ENCODE measurements at regions of chr19 and their contacts with region 1.

Region 1: GRCh38 chr19:46614114-46614722 is 10.7 kb downstream of the PTGIR start:
- DNase-seq: peak; percentile 71 to 89 (median 77)
- ATAC-seq: peak; percentile 58
- H3K4me3 ChIP-seq: no peak overlapping the region
- H3K4me3 Mint-ChIP-seq: peak overlapping the region; percentile 56
- H3K27ac ChIP-seq: peak overlapping the region in 1 of 2 donors; percentile 41
- H3K27ac Mint-ChIP-seq: peak overlapping the region; percentile 93
- H3K4me1 ChIP-seq: peaks cover 90% of the 10 kb centered on the region
- H3K4me1 Mint-ChIP-seq: peaks cover 74% of the 10 kb centered on the region
- H3K27me3 ChIP-seq: no peaks in the 10 kb centered on the region
- H3K27me3 Mint-ChIP-seq: no peaks in the 10 kb centered on the region
- CTCF ChIP-seq: peak; percentile 90

Region 2: DNA sequence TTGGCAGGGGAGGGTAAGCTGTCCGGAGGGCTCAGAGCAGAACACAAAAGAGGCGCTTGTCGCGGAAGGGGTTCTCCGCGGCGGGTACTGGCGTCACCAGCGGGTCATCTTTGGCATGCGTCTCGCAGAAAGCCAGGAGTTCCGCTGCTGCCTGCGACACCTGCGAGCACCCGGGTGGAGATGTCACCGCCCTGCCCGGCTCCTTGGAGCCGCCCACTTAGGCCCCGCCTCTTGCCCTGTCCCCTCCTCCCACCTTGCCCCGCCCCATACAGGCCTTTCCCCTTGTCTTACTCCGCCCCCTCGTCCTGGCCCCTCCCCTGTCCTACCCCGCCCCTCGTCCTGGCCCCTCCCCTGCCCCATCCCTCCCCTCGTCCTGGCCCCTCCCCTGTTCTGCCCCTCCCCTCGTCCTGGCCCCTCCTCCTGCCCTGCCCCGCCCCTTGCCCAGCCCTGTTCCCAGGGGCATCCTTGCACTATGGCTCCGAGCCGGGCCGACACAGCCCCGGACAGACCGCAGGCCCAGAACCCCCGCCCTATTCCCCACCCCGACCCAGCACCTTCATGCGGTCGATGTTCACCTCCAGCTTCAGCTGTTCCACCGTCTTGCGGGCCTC is 19.9 kb after region 1 on chr19:
- CTCF ChIA-PET with region 1: interaction called, 16 read pairs
- POLR2A ChIA-PET with region 1: interaction called, 6 read pairs
- intact Hi-C with region 1: no loop called
- DNase-seq: peak; percentile 93 to 98 (median 97)
- ATAC-seq: peak; percentile 79
- H3K4me3 ChIP-seq: peak overlapping the region; percentile 57
- H3K4me3 Mint-ChIP-seq: peak overlapping the region; percentile 80
- H3K27ac ChIP-seq: peak overlapping the region; percentile 68 to 75
- H3K27ac Mint-ChIP-seq: peak overlapping the region; percentile 83
- H3K4me1 ChIP-seq: peaks cover 52% of the 10 kb centered on the region
- H3K4me1 Mint-ChIP-seq: peaks cover 19% of the 10 kb centered on the region
- H3K27me3 ChIP-seq: no peaks in the 10 kb centered on the region
- H3K27me3 Mint-ChIP-seq: no peaks in the 10 kb centered on the region
- CTCF ChIP-seq: no peak

Region 3: DNA sequence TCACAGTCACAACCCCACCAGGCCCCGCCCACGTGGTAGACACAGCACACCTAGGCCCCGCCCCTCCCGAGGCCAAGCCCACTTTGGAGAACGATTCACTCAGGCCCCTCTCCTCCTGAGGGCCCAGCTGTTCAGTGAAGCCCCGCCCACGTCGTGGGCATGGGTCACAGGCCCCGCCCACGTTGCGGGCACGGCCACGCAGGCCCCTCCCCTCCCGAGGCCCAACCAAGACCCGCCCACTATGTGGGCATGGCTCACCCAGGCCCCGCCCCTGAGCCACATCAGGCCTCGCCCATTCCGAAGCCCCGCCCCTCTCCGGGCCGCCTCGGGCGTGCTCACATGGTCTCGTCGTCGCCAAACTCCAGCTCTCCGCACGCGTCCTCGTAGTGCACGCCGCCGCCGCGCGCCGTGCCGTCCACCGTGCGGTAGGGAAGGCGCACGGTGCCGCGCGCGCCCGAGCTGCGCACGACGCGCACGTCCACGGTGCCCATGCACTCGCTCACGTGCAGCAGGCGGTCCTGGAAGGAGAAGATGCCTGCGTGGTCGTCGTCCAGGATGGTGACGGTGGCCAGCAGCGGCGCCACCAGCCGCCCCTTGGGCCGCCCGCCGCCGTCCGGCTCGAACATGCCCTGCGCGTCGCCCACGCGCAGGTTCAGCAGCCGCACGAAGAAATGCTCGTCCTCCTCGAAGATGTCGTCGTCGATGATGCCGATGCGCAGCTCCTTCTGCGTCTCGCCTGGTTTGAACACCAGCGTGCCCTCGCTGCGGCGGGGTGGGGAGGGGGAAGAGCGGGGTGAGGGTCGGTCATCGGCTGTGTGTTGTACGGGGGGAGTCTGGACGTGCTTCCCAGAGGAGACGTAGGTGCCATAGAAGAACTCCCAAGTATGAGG is 833.5 kb after region 1 on chr19:
- CTCF ChIA-PET with region 1: no interaction called
- POLR2A ChIA-PET with region 1: no interaction called
- intact Hi-C with region 1: no loop called
- DNase-seq: peak in 12 of 14 experiments; percentile 23 to 81 (median 53)
- ATAC-seq: peak; percentile 64
- H3K4me3 ChIP-seq: peak overlapping the region; percentile 10
- H3K4me3 Mint-ChIP-seq: peak overlapping the region; percentile 79
- H3K27ac ChIP-seq: no peak overlapping the region
- H3K27ac Mint-ChIP-seq: no peak overlapping the region
- H3K4me1 ChIP-seq: peaks cover 51% of the 10 kb centered on the region
- H3K4me1 Mint-ChIP-seq: peaks cover 53% of the 10 kb centered on the region
- H3K27me3 ChIP-seq: peaks cover 23 to 31% of the 10 kb centered on the region in 2 experiments
- H3K27me3 Mint-ChIP-seq: peaks cover 71% of the 10 kb centered on the region
- CTCF ChIP-seq: no peak